ENCODE measurements at regions of chr22 and their contacts with region 1.

Region 1: GRCh38 chr22:22130953-22131608 is 113.5 kb upstream of the VPREB1 start:
- DNase-seq: no peak
- ATAC-seq: no peak
- H3K4me3 Mint-ChIP-seq: no peak overlapping the region
- H3K27ac Mint-ChIP-seq: no peak overlapping the region
- H3K4me1 Mint-ChIP-seq: peaks cover 2% of the 10 kb centered on the region
- H3K27me3 Mint-ChIP-seq: peaks cover 3% of the 10 kb centered on the region
- CTCF ChIP-seq: no peak

Region 2: GRCh38 chr22:22103078-22103875 is 27.8 kb before region 1 on chr22:
- CTCF ChIA-PET with region 1: no interaction called
- POLR2A ChIA-PET with region 1: no interaction called
- intact Hi-C with region 1: no loop called
- DNase-seq: peak; percentile 46
- ATAC-seq: peak; percentile 67
- H3K4me3 Mint-ChIP-seq: no peak overlapping the region
- H3K27ac Mint-ChIP-seq: no peak overlapping the region
- H3K4me1 Mint-ChIP-seq: no peaks in the 10 kb centered on the region
- H3K27me3 Mint-ChIP-seq: peaks cover 2% of the 10 kb centered on the region
- CTCF ChIP-seq: peak; percentile 57

Region 3: DNA sequence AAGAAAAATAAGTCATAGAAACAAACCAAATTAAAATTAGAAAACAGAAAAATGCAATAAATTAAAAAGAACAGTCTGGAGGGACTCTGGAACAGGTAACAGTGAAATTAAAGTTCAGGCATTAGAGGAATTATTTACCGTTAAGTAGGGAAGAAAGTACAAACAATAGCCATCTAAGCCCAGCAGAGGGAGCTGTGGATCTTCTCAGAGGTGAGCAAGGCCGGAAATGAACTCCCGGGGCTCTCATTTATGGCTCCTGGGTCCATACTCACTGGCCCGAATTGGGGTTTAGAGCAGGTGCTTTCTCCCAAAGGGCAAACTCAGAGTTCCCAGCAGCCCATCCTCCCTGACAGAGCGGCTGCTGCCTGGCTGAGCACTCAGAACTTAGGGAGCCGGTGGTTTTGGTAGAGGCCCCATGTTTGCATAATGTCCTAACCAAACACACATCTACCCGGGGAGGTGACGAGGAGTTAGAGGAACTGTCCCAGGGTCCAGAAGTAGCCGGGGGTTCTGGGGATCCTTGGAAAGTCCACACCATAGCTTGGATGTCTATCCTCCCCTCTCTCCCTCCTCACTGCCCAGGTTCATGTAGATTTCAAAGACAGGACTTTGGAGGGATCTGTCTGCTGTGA is 25.8 kb after region 1 on chr22:
- CTCF ChIA-PET with region 1: interaction called, 10 read pairs
- POLR2A ChIA-PET with region 1: no interaction called
- intact Hi-C with region 1: no loop called
- DNase-seq: peak; percentile 84
- ATAC-seq: peak; percentile 99
- H3K4me3 Mint-ChIP-seq: no peak overlapping the region
- H3K27ac Mint-ChIP-seq: peak overlapping the region; percentile 53
- H3K4me1 Mint-ChIP-seq: no peaks in the 10 kb centered on the region
- H3K27me3 Mint-ChIP-seq: peaks cover 5% of the 10 kb centered on the region
- CTCF ChIP-seq: peak; percentile 82

Region 4: GRCh38 chr22:22226448-22227187 is 95.5 kb after region 1 on chr22:
- CTCF ChIA-PET with region 1: no interaction called
- POLR2A ChIA-PET with region 1: no interaction called
- intact Hi-C with region 1: no loop called
- DNase-seq: no peak
- ATAC-seq: no peak
- H3K4me3 Mint-ChIP-seq: no peak overlapping the region
- H3K27ac Mint-ChIP-seq: no peak overlapping the region
- H3K4me1 Mint-ChIP-seq: no peaks in the 10 kb centered on the region
- H3K27me3 Mint-ChIP-seq: peaks cover 5% of the 10 kb centered on the region
- CTCF ChIP-seq: no peak

Measured in activated CD8-positive, alpha-beta T cell treated with anti-CD3 and anti-CD28 coated beads for 36 hours (primary cell).